ENCODE measurements at regions of chr6 and their contacts with region 1.

Region 1: GRCh38 chr6:52664186-52664990 is 6.5 kb upstream of the TMEM14A start:
- DNase-seq: peak; percentile 93
- H3K4me3 Mint-ChIP-seq: no peak overlapping the region
- H3K27ac Mint-ChIP-seq: no peak overlapping the region
- H3K4me1 Mint-ChIP-seq: peaks cover 4% of the 10 kb centered on the region
- H3K27me3 Mint-ChIP-seq: no peaks in the 10 kb centered on the region

Region 2: GRCh38 chr6:52063584-52064344 is 600.6 kb before region 1 on chr6:
- intact Hi-C with region 1: loop called (anchors 10 kb)
- DNase-seq: peak; percentile 86
- H3K4me3 Mint-ChIP-seq: peak overlapping the region; percentile 53
- H3K27ac Mint-ChIP-seq: peak overlapping the region; percentile 72
- H3K4me1 Mint-ChIP-seq: peaks cover 7% of the 10 kb centered on the region
- H3K27me3 Mint-ChIP-seq: peaks cover 13% of the 10 kb centered on the region

Region 3: GRCh38 chr6:52407467-52407866 is 256.9 kb before region 1 on chr6:
- intact Hi-C with region 1: loop called (anchors 1 kb)
- DNase-seq: no peak
- H3K4me3 Mint-ChIP-seq: no peak overlapping the region
- H3K27ac Mint-ChIP-seq: no peak overlapping the region
- H3K4me1 Mint-ChIP-seq: no peaks in the 10 kb centered on the region
- H3K27me3 Mint-ChIP-seq: peaks cover under 1% of the 10 kb centered on the region

Region 4: DNA sequence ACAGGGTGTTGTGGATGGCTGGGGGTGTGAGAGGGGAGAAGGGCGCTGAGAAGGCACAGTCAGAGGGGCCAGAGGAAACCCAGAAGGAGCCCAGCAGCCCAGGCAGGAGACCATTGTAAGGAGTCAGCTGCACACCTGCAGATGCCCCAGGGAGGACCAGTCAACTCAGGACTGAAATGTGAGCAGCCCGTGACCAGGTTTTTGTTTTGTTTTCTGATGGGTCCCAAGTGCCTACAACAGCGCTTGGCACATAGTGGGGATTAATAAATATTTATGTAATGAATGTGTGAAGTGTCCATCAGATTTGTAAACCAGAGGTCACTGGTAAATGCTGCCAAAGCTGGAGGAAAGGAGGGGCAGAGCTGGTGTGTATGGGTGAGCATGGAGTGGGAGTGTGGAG is 117.7 kb before region 1 on chr6:
- intact Hi-C with region 1: no loop called
- DNase-seq: no peak
- H3K4me3 Mint-ChIP-seq: no peak overlapping the region
- H3K27ac Mint-ChIP-seq: no peak overlapping the region
- H3K4me1 Mint-ChIP-seq: peaks cover 10% of the 10 kb centered on the region
- H3K27me3 Mint-ChIP-seq: no peaks in the 10 kb centered on the region

Region 5: GRCh38 chr6:52577022-52577777 is 87.2 kb before region 1 on chr6 and contains the start of gene TRAM2:
- intact Hi-C with region 1: loop called (anchors 2 kb)
- DNase-seq: peak; percentile 94
- H3K4me3 Mint-ChIP-seq: peak within 1 kb of the TSS; percentile 81
- H3K27ac Mint-ChIP-seq: peak within 1 kb of the TSS; percentile 71
- H3K4me1 Mint-ChIP-seq: peaks cover 30% of the 10 kb centered on the region
- H3K27me3 Mint-ChIP-seq: peaks cover 13% of the 10 kb centered on the region
- total RNA-seq, gene TRAM2: 2.6 TPM in 2 replicates

Region 6: GRCh38 chr6:53064726-53065215 is 400.4 kb after region 1 on chr6:
- intact Hi-C with region 1: loop called (anchors 2 kb)
- DNase-seq: peak; percentile 98
- H3K4me3 Mint-ChIP-seq: peak overlapping the region; percentile 100
- H3K27ac Mint-ChIP-seq: peak overlapping the region; percentile 100
- H3K4me1 Mint-ChIP-seq: peaks cover 46% of the 10 kb centered on the region
- H3K27me3 Mint-ChIP-seq: no peaks in the 10 kb centered on the region